Activated naive CD8-positive, alpha-beta T cell treated with anti-CD3 and anti-CD28 coated beads, Interleukin-2, amount 10 ng/mL, durations not matched to agents 7 days and 5 days (primary cell): ENCODE measurements at regions of chr5 and their contacts with region 1.

Region 1: DNA sequence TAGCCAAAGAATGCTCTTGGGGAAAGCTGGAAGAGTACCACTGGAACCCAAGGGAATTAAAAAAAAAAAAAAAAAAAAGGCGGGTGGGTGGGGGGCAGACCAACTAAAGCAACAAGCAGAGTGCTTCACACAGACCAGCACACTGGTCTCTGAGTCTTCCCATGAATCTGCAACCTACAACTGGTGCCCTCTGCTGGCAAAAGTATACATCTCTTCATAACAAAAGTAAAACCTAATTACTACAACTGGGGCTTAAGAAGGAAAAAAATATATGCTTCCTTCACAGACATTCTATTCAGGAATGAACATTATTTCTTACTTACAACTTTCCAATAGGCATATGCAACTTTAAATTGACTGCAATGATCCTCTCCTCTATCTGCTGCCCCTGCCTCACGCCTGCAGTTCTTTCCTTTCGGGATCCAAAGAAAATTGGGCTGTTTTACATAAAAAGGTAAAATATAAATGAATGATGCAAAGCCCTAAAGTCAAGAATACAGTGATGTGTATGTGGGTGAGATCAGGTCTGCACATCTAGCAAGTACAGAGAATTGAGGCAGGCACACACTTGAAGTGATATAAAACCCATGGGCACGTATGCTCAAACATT is 7.2 kb upstream of the KLHL3 start:
- DNase-seq: peak; percentile 34
- ATAC-seq: peak; percentile 83
- H3K4me3 Mint-ChIP-seq: no peak overlapping the region
- H3K27ac Mint-ChIP-seq: no peak overlapping the region
- H3K4me1 Mint-ChIP-seq: peaks cover 10% of the 10 kb centered on the region
- H3K27me3 Mint-ChIP-seq: no peaks in the 10 kb centered on the region

Region 2: GRCh38 chr5:137660349-137660817 is 82.8 kb before region 1 on chr5:
- POLR2A ChIA-PET with region 1: interaction called, 14 read pairs
- DNase-seq: peak; percentile 63
- ATAC-seq: peak; percentile 91
- H3K4me3 Mint-ChIP-seq: no peak overlapping the region
- H3K27ac Mint-ChIP-seq: no peak overlapping the region
- H3K4me1 Mint-ChIP-seq: peaks cover 13% of the 10 kb centered on the region
- H3K27me3 Mint-ChIP-seq: no peaks in the 10 kb centered on the region